ENCODE measurements at regions of chr5 and their contacts with region 1.

Region 1: DNA sequence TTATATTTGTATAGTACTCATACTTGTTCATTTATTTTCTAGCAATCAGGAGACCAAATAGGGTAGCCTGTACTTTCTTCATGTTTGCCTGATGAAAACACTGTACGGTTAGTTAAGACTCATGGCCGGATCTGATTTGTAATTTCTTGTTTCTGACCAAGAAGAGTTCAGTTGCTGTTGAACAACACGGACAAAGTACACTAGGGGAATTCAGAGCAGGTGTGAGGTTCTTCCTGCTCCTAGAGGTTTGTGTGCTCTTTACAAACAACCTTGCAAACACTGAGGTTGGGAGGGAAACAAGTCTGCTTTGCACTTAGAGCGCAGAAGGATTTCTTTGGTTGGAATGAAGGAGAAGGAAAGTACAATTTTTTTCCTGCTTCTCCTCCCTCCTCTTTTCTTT is 69.7 kb downstream of the TRIO start:
- DNase-seq: peak in 1 of 2 donors; percentile 67
- H3K4me3 ChIP-seq: peak overlapping the region in 1 of 4 donors; percentile 4
- H3K27ac ChIP-seq: peak overlapping the region in 4 of 5 donors; percentile 21 to 77 (median 62)
- H3K4me1 ChIP-seq: peaks cover 16 to 80% (median 51%) of the 10 kb centered on the region in 4 donors
- H3K27me3 ChIP-seq: no peaks in the 10 kb centered on the region
- CTCF ChIP-seq: no peak
- EP300 ChIP-seq: no peak
- POLR2A ChIP-seq: no peak

Region 2: DNA sequence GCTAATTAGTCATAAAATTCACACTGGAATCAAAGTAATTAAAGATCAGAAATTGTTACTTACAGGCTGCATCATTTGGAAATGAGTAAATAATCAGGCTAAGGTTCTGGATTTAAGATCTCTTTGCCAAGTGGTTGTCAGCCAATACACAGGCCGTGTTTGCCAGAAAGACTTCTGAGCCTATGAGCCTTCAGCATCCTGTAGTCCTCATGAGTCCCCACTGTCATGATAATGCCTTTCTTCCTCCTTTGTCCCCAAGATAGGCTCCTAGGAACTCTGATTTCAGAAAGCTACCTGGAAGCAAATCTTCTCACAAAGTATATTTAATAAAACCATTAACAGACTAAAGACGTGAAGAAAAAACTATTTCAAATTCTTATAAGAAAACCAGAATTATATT is 1078.9 kb before region 1 on chr5:
- intact Hi-C with region 1: no loop called
- DNase-seq: no peak
- H3K4me3 ChIP-seq: no peak overlapping the region
- H3K27ac ChIP-seq: no peak overlapping the region
- H3K4me1 ChIP-seq: no peaks in the 10 kb centered on the region
- H3K27me3 ChIP-seq: no peaks in the 10 kb centered on the region
- CTCF ChIP-seq: no peak
- EP300 ChIP-seq: no peak
- POLR2A ChIP-seq: no peak

Region 3: DNA sequence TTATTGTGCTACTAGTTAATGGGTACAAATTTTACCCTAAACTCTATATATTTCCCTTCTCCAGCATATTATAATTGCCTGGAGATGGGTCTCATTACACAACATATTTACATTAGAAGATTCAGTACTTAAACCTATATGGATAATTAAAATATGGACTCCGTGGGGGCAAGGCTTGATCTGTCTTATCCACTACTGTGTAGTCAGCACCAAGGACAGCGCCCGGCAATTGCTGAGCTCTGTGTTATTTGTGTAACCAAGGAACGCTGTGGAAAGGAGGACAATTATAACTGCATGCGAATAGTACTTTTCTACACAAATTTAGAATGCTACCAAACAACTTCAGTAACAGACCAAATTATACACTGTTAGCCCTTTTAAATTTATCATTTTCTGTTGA is 346.0 kb before region 1 on chr5:
- intact Hi-C with region 1: no loop called
- DNase-seq: peak in 1 of 2 donors; percentile 61
- H3K4me3 ChIP-seq: no peak overlapping the region
- H3K27ac ChIP-seq: no peak overlapping the region
- H3K4me1 ChIP-seq: no peaks in the 10 kb centered on the region
- H3K27me3 ChIP-seq: no peaks in the 10 kb centered on the region
- CTCF ChIP-seq: no peak
- EP300 ChIP-seq: no peak
- POLR2A ChIP-seq: no peak

Region 4: GRCh38 chr5:14142827-14143548 is 69.8 kb before region 1 on chr5 and contains the start of gene TRIO:
- intact Hi-C with region 1: loop called (anchors 10 kb)
- DNase-seq: peak; percentile 89 to 97
- H3K4me3 ChIP-seq: peak within 1 kb of the TSS; percentile 77 to 92 (median 88)
- H3K27ac ChIP-seq: peak within 1 kb of the TSS; percentile 91 to 99 (median 97)
- H3K4me1 ChIP-seq: peaks cover 15 to 41% (median 31%) of the 10 kb centered on the region in 4 donors
- H3K27me3 ChIP-seq: peaks cover 0 to 3% (median 0%) of the 10 kb centered on the region in 3 donors
- CTCF ChIP-seq: peak in 3 of 7 experiments; percentile 12 to 48 (median 32)
- EP300 ChIP-seq: no peak
- POLR2A ChIP-seq: no peak
- total RNA-seq, gene TRIO: 67.1 to 558 (median 199) TPM

Measured in stomach (tissue), 19 donors.